ENCODE measurements at regions of chr11 and their contacts with region 1.

Region 1: GRCh38 chr11:6377902-6378639 is 12.2 kb upstream of the SMPD1 start:
- DNase-seq: peak; percentile 64
- H3K4me3 ChIP-seq: peak overlapping the region in 1 of 3 experiments; percentile 27
- H3K27ac ChIP-seq: peak overlapping the region; percentile 66
- H3K4me1 ChIP-seq: peaks cover 17% of the 10 kb centered on the region
- H3K27me3 ChIP-seq: no peaks in the 10 kb centered on the region
- CTCF ChIP-seq: no peak
- POLR2A ChIP-seq: peak; percentile 69

Region 2: DNA sequence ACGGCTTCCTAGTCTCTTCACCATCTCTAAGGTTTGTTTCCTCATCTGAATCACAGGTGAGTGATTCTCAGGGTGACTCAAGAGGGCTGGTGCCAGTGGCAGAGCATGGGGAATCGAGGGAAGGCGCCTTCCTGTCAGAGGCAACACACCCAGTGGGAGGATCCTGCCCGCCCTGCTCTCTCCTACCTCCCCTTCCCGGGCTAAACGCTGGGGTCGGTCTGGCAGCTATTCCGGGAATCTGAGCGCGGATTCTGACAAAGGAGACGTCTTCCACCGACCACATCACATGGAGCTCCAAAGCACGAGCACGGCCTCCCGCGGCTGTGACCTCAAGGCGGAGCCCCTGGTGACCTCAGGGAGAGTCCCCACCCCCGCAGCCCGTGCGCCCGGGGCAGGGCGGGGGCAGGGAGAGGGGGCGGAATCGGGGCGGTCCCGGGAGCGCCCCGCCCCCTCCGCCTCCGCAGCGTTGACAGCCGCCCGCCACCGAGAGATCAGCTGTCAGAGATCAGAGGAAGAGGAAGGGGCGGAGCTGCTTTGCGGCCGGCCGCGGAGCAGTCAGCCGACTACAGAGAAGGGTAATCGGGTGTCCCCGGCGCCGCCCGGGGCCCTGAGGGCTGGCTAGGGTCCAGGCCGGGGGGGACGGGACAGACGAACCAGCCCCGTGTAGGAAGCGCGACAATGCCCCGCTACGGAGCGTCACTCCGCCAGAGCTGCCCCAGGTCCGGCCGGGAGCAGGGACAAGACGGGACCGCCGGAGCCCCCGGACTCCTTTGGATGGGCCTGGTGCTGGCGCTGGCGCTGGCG is 12.1 kb after region 1 on chr11 and contains the start of gene SMPD1:
- CTCF ChIA-PET with region 1: interaction called, 115 read pairs
- POLR2A ChIA-PET with region 1: interaction called, 9 read pairs
- dilution Hi-C with region 1: no loop called
- intact Hi-C with region 1: no loop called
- DNase-seq: peak; percentile 90
- H3K4me3 ChIP-seq: peak within 1 kb of the TSS; percentile 71 to 82 (median 72)
- H3K27ac ChIP-seq: peak within 1 kb of the TSS; percentile 73
- H3K4me1 ChIP-seq: peaks cover 33% of the 10 kb centered on the region
- H3K27me3 ChIP-seq: no peaks in the 10 kb centered on the region
- CTCF ChIP-seq: no peak
- POLR2A ChIP-seq: peak; percentile 86
- total RNA-seq, gene SMPD1: 51.9 and 58.9 TPM in 2 replicates

Region 3: DNA sequence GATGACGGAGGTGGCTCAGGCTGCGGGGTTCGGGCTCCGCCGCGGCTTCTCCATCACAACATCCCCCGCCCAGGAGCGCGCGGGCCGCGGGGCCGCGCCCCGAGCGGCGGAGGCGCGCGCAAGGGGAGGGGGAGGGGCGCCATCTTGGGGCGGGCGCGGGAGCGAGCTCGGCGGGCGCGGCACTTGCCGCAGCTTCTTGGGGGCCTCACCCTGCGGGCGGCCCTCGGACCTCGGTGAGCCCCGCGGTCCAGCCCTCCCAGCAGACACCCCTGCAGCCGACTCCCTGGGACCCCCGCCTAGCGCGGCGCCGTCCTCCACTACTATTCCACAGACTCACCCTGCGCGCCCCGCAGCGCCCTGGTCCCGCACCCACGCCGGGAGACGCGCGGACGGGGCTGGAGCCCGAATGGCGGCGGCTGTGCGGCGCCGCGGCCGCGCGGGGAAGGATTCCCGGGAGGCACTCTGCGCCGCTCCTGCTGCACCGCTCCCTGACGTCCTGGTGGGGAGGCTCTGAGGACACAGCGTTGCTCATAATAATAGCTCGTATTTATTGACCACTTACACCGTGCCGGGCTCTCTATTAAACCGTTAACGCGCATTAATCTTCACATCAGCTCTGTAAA is 41.0 kb after region 1 on chr11 and contains the start of gene APBB1:
- CTCF ChIA-PET with region 1: interaction called, 40 read pairs
- POLR2A ChIA-PET with region 1: interaction called, 9 read pairs
- dilution Hi-C with region 1: no loop called
- intact Hi-C with region 1: loop called (anchors 1 kb)
- DNase-seq: peak; percentile 67
- H3K4me3 ChIP-seq: peak within 1 kb of the TSS; percentile 78 to 88 (median 86)
- H3K27ac ChIP-seq: no peak within 1 kb of the TSS
- H3K4me1 ChIP-seq: peaks cover 10% of the 10 kb centered on the region
- H3K27me3 ChIP-seq: peaks cover 7 to 14% of the 10 kb centered on the region in 2 experiments
- CTCF ChIP-seq: peak in 1 of 2 donors; percentile 18
- POLR2A ChIP-seq: peak; percentile 79
- total RNA-seq, gene APBB1: 44.3 and 48.0 TPM in 2 replicates

Region 4: DNA sequence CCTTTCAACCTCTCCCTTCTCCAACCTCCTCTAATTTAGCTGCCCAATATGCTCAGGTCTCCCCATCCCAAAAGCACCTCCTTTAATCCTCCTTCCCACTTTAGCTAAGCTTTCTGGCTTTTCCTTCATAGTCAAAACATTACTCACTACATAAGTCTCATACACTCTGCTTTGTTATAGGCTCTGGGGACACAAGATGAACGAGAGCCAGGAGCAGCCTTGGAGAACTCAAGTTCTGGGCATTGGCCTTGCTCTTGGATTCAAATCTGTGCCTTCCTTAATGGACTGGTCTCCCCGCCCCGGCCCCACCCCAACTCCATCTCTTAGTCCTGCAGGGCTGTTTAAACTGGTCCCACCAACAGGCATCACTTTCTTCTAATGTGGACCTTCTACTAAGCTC is 74.1 kb after region 1 on chr11:
- CTCF ChIA-PET with region 1: interaction called, 23 read pairs
- POLR2A ChIA-PET with region 1: no interaction called
- dilution Hi-C with region 1: no loop called
- intact Hi-C with region 1: no loop called
- DNase-seq: no peak
- H3K4me3 ChIP-seq: no peak overlapping the region
- H3K27ac ChIP-seq: no peak overlapping the region
- H3K4me1 ChIP-seq: no peaks in the 10 kb centered on the region
- H3K27me3 ChIP-seq: no peaks in the 10 kb centered on the region
- CTCF ChIP-seq: no peak
- POLR2A ChIP-seq: no peak

Region 5: GRCh38 chr11:6486938-6487337 is 108.9 kb after region 1 on chr11:
- CTCF ChIA-PET with region 1: interaction called, 28 read pairs
- POLR2A ChIA-PET with region 1: interaction called, 4 read pairs
- dilution Hi-C with region 1: no loop called
- intact Hi-C with region 1: no loop called
- DNase-seq: no peak
- H3K4me3 ChIP-seq: no peak overlapping the region
- H3K27ac ChIP-seq: no peak overlapping the region
- H3K4me1 ChIP-seq: peaks cover 11% of the 10 kb centered on the region
- H3K27me3 ChIP-seq: no peaks in the 10 kb centered on the region
- CTCF ChIP-seq: no peak
- POLR2A ChIP-seq: no peak

Region 6: DNA sequence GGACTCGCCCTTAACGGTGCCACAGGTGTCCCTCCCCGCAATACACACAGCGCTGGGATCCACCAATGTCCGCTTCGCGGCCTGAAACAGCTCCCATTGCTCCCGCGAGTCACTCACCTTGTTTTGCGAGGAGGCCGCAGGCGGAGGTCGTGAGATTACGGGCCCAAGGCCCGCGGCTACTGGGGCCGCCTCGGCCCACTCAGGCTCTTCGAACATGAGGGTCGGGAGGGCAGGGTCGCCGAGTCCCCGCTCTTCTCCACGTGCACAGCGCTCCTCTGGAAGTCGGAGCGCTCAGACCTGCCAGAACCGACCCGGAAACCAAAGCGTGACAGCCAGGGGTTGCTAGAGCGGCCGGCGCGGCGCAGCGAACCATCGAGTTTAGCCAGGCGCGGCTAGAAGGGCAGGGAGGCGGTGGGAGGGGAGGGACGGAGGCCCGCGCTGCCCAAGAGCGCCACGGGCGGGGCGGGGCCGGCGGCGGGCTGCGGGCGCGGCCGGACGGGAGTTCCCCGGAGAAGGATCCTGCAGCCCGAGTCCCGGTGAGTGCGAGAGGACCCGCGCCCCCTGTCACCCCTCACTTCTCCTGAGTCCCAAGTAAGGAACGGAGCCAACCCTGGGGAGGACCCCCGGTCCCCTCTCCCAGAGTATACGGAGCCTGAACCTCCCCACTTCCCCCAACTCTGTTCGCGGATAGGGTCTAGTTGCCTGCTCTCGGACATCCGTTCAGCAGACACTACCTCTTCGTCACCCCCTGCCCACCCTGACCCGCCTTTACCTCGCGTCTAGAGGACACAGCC is 225.4 kb after region 1 on chr11 and contains the starts of genes ILK and RRP8:
- CTCF ChIA-PET with region 1: interaction called, 23 read pairs
- POLR2A ChIA-PET with region 1: no interaction called
- dilution Hi-C with region 1: no loop called
- intact Hi-C with region 1: loop called (anchors 2 kb)
- DNase-seq: peak; percentile 93
- H3K4me3 ChIP-seq: peak within 1 kb of the TSS; percentile 62 to 97 (median 90)
- H3K27ac ChIP-seq: peak within 1 kb of the TSS; percentile 83
- H3K4me1 ChIP-seq: peaks cover 44% of the 10 kb centered on the region
- H3K27me3 ChIP-seq: no peaks in the 10 kb centered on the region
- CTCF ChIP-seq: no peak
- POLR2A ChIP-seq: peak; percentile 87
- total RNA-seq, gene ILK: 221 and 233 TPM in 2 replicates
- total RNA-seq, gene RRP8: 19.4 and 23.3 TPM in 2 replicates

Region 7: DNA sequence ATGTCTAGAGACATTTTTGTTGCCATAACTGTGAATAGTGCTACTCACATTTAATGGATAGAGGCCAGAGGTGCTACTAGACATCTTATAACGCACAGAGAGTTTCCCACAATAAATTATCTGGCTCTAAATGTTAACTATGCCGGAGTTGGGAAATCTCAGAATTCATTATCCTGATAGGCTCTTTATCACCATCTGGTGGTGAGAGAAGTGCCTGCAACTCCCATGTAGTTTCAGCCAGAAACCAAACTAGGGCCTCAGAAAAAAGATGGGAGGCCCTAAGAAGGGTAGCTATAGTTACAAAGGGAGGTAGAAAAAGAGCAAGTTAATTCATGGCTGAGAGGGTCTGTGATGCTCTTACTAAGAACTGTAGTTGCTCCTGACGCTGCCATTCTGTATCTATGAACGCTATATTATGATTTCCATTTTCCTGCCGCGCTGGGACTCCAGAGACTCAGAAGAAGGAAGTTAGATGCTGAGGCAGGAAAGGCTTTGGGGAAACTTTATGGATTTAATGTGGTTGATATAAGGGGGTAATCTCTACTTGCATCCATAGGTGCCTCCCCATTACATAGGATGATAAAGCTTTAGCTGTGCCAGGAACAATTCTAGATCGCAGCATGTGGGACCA is 327.9 kb after region 1 on chr11:
- CTCF ChIA-PET with region 1: interaction called, 41 read pairs
- POLR2A ChIA-PET with region 1: no interaction called
- dilution Hi-C with region 1: no loop called
- intact Hi-C with region 1: loop called (anchors 1 kb)
- DNase-seq: peak; percentile 66
- H3K4me3 ChIP-seq: no peak overlapping the region
- H3K27ac ChIP-seq: no peak overlapping the region
- H3K4me1 ChIP-seq: peaks cover 6% of the 10 kb centered on the region
- H3K27me3 ChIP-seq: no peaks in the 10 kb centered on the region
- CTCF ChIP-seq: peak; percentile 72 to 78
- POLR2A ChIP-seq: no peak